AG04450 (cell line): ENCODE measurements at regions of chr1 and their contacts with region 1.

Region 1: GRCh38 chr1:6889875-6890480 is 104.7 kb downstream of the CAMTA1 start:
- DNase-seq: peak; percentile 33
- H3K4me3 ChIP-seq: no peak overlapping the region
- H3K27ac ChIP-seq: no peak overlapping the region
- H3K27me3 ChIP-seq: no peaks in the 10 kb centered on the region
- CTCF ChIP-seq: peak; percentile 81

Region 2: GRCh38 chr1:6784560-6785317 is 105.2 kb before region 1 on chr1:
- CTCF ChIA-PET with region 1: interaction called, 11 read pairs
- POLR2A ChIA-PET with region 1: no interaction called
- DNase-seq: peak; percentile 100
- H3K4me3 ChIP-seq: peak overlapping the region; percentile 69
- H3K27ac ChIP-seq: peak overlapping the region; percentile 85
- H3K27me3 ChIP-seq: no peaks in the 10 kb centered on the region
- CTCF ChIP-seq: no peak

Region 3: GRCh38 chr1:6794164-6794563 is 95.8 kb before region 1 on chr1:
- CTCF ChIA-PET with region 1: interaction called, 41 read pairs
- POLR2A ChIA-PET with region 1: interaction called, 5 read pairs
- DNase-seq: peak; percentile 29
- H3K4me3 ChIP-seq: no peak overlapping the region
- H3K27ac ChIP-seq: no peak overlapping the region
- H3K27me3 ChIP-seq: no peaks in the 10 kb centered on the region
- CTCF ChIP-seq: peak; percentile 49

Region 4: GRCh38 chr1:6801966-6802365 is 88.0 kb before region 1 on chr1:
- CTCF ChIA-PET with region 1: interaction called, 41 read pairs
- POLR2A ChIA-PET with region 1: interaction called, 5 read pairs
- DNase-seq: no peak
- H3K4me3 ChIP-seq: no peak overlapping the region
- H3K27ac ChIP-seq: peak overlapping the region; percentile 43
- H3K27me3 ChIP-seq: no peaks in the 10 kb centered on the region
- CTCF ChIP-seq: no peak

Region 5: DNA sequence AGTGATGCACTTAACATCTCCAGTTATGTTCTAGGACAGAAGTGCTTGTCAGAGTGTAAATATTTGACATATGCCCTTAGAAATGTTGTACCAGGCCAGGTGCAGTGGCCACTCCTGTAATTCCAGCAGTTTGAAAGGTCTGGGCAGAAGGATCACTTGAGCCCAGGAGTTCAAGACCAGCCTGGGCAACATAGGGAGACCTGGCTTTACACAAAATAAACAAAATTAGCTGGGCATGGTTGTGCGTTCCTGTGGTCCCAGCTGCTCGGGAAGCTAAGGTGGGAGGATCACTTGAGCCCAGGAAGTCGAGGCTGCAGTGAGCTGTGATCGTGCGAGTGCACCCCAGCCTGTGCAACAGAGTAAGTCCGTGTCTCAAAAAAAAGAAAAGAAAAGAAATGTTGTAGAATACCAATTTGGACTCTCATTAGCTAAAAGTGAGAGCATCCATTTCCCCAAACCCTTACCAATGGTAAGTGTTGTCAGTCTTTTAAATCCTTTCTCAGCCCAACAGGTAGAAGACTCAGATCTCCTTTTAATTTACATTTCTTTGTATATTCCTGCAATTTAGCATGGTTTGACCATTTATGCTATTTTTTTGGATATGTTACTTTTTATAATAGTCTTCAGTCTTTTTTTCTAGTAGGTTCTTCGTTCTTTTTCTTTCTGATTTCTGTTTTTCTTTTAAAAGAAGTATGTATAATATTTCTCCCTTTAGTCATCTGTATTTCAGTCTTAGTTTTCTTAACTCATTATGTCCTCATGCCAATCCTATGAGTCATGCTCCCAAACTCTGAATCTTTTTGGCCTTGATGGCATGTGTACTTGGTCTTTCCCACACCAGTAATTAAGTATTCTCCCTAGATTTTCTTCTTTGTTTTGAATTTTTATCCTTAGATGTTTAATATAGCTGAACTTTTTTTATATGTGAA is 30.3 kb before region 1 on chr1:
- CTCF ChIA-PET with region 1: interaction called, 12 read pairs
- POLR2A ChIA-PET with region 1: no interaction called
- DNase-seq: peak; percentile 96
- H3K4me3 ChIP-seq: peak overlapping the region; percentile 27
- H3K27ac ChIP-seq: peak overlapping the region; percentile 66
- H3K27me3 ChIP-seq: no peaks in the 10 kb centered on the region
- CTCF ChIP-seq: no peak

Region 6: GRCh38 chr1:6868660-6869380 is 21.2 kb before region 1 on chr1:
- CTCF ChIA-PET with region 1: interaction called, 11 read pairs
- POLR2A ChIA-PET with region 1: no interaction called
- DNase-seq: no peak
- H3K4me3 ChIP-seq: no peak overlapping the region
- H3K27ac ChIP-seq: no peak overlapping the region
- H3K27me3 ChIP-seq: no peaks in the 10 kb centered on the region
- CTCF ChIP-seq: no peak

Region 7: GRCh38 chr1:6904466-6905170 is 14.6 kb after region 1 on chr1:
- CTCF ChIA-PET with region 1: interaction called, 11 read pairs
- POLR2A ChIA-PET with region 1: no interaction called
- DNase-seq: no peak
- H3K4me3 ChIP-seq: no peak overlapping the region
- H3K27ac ChIP-seq: no peak overlapping the region
- H3K27me3 ChIP-seq: no peaks in the 10 kb centered on the region
- CTCF ChIP-seq: no peak

Region 8: GRCh38 chr1:6914706-6915105 is 24.7 kb after region 1 on chr1:
- CTCF ChIA-PET with region 1: no interaction called
- POLR2A ChIA-PET with region 1: no interaction called
- DNase-seq: no peak
- H3K4me3 ChIP-seq: no peak overlapping the region
- H3K27ac ChIP-seq: no peak overlapping the region
- H3K27me3 ChIP-seq: peaks cover 6% of the 10 kb centered on the region
- CTCF ChIP-seq: no peak

Region 9: DNA sequence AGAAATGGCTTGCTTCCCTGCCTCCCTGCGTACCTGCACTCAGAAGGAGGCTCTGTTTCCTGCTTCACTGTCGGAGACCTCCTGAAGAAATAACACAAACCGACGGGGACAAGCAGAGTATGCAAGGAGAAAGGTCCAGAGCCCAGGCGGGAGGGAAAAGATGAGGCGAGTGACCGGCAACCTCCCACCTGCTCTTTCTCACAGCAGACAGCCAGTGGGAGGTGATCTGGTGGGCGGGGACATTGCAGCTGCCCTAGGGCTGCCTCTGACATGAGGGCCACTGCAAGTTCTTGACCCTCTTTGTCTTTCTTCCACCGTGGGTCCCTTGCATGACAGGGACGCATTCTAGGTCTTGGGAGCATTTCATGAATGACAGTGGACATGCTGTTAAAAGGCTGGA is 263.5 kb after region 1 on chr1:
- CTCF ChIA-PET with region 1: no interaction called
- POLR2A ChIA-PET with region 1: no interaction called
- DNase-seq: no peak
- H3K4me3 ChIP-seq: no peak overlapping the region
- H3K27ac ChIP-seq: no peak overlapping the region
- H3K27me3 ChIP-seq: peaks cover 9% of the 10 kb centered on the region
- CTCF ChIP-seq: no peak